Activated CD4-positive, alpha-beta memory T cell treated with anti-CD3 and anti-CD28 coated beads for 36 hours (primary cell): ENCODE measurements at regions of chr17 and their contacts with region 1.

Region 1: GRCh38 chr17:29705386-29705785 is 82.7 kb upstream of the CORO6 start:
- DNase-seq: no peak
- H3K4me3 Mint-ChIP-seq: peak overlapping the region; percentile 61
- H3K27ac Mint-ChIP-seq: peak overlapping the region; percentile 95
- H3K4me1 Mint-ChIP-seq: peaks cover 41% of the 10 kb centered on the region
- H3K27me3 Mint-ChIP-seq: no peaks in the 10 kb centered on the region

Region 2: DNA sequence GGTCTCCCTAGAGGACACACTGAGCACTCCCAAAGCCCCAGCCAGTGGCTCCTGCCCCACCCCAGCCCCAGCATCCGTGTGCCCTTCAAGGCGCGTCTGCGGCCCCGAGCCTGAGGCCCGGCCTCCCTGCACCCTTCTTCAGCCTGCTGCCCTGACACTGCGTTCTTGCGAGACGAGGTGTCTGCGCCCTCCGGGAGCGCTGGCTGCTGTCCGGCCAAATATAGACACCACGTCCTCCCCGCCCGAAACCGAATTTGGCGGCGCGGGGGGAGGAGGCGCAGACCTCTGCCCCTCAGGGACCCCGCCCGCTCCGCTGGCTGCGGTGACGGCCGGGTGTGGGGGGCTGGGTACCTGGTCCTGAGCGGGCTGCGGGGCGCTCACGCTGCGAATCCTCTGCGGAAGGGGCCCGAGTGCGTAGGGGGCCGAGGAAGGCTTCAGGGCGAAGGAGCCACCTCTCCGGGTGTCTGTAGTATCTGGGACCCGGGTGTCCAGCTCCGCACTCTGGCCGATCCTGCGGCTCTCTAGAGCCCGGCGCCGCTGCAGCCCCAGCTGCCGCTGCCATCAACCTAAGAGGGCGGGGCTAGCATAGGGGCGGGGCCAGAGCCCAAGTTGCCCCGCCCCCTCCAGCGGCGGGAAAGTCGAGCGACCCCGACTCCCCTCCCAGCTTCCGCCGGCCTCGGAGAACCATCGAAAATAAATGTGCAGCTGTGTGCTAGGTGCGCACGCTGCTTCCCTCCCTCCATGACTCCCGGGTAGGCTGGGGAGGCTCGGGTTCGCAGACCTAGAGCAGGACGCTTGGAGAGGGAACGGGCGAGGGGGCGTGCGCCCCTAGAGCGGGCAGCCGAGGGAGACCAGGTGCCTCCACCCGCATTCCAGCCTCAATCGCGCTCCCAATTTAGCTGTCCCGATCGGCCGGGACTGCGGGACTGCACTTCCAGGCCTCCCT is 82.8 kb before region 1 on chr17 and contains the start of gene CORO6:
- CTCF ChIA-PET with region 1: interaction called, 19 read pairs
- POLR2A ChIA-PET with region 1: interaction called, 5 read pairs
- intact Hi-C with region 1: loop called (anchors 2 kb)
- DNase-seq: peak; percentile 74
- H3K4me3 Mint-ChIP-seq: peak within 1 kb of the TSS; percentile 78
- H3K27ac Mint-ChIP-seq: peak within 1 kb of the TSS; percentile 85
- H3K4me1 Mint-ChIP-seq: peaks cover 60% of the 10 kb centered on the region
- H3K27me3 Mint-ChIP-seq: no peaks in the 10 kb centered on the region
- total RNA-seq, gene CORO6: 21.3 to 22.1 TPM

Region 3: DNA sequence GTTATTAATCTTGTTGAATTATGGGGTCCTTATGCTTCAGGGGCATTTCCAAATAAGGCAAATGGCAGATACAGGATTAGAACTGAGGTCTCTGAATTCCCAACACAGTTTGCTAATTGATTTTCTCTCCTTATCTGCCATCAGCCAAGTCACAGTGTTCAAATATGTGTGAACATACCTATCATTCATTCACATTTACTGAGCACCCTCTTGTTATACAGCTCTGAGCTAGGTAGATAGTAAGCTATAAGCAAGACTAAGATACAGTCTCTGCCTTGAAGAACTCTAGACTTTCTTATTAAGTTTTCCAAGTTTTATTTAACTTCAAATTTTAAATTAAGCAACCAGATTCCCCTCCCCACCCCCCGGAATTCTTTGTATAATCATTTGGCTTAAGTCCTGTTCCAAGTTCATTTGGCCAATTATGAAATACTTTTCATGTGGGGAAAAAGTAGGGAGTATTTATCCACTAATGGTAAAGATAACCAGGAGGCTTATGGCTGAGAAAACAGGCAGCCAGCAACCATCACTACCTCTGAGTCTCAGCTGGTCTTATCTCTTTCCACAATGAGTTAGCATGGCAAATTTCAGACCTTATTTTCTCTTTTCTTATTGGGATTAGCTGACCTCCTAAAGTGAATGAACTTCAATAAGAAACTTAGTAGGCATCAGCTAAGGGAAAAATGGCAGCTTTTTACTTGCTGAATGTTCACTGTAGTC is 51.2 kb before region 1 on chr17:
- CTCF ChIA-PET with region 1: no interaction called
- POLR2A ChIA-PET with region 1: no interaction called
- intact Hi-C with region 1: no loop called
- DNase-seq: no peak
- H3K4me3 Mint-ChIP-seq: no peak overlapping the region
- H3K27ac Mint-ChIP-seq: no peak overlapping the region
- H3K4me1 Mint-ChIP-seq: peaks cover 2% of the 10 kb centered on the region
- H3K27me3 Mint-ChIP-seq: no peaks in the 10 kb centered on the region

Region 4: GRCh38 chr17:29664743-29665480 is 40.5 kb before region 1 on chr17:
- CTCF ChIA-PET with region 1: interaction called, 3 read pairs
- POLR2A ChIA-PET with region 1: interaction called, 6 read pairs
- intact Hi-C with region 1: loop called (anchors 1 kb)
- DNase-seq: no peak
- H3K4me3 Mint-ChIP-seq: no peak overlapping the region
- H3K27ac Mint-ChIP-seq: peak overlapping the region; percentile 84
- H3K4me1 Mint-ChIP-seq: peaks cover 33% of the 10 kb centered on the region
- H3K27me3 Mint-ChIP-seq: no peaks in the 10 kb centered on the region

Region 5: GRCh38 chr17:29687596-29687995 is 17.8 kb before region 1 on chr17:
- CTCF ChIA-PET with region 1: interaction called, 6 read pairs
- POLR2A ChIA-PET with region 1: interaction called, 10 read pairs
- intact Hi-C with region 1: loop called (anchors 1 kb)
- DNase-seq: no peak
- H3K4me3 Mint-ChIP-seq: no peak overlapping the region
- H3K27ac Mint-ChIP-seq: no peak overlapping the region
- H3K4me1 Mint-ChIP-seq: peaks cover 17% of the 10 kb centered on the region
- H3K27me3 Mint-ChIP-seq: no peaks in the 10 kb centered on the region

Region 6: DNA sequence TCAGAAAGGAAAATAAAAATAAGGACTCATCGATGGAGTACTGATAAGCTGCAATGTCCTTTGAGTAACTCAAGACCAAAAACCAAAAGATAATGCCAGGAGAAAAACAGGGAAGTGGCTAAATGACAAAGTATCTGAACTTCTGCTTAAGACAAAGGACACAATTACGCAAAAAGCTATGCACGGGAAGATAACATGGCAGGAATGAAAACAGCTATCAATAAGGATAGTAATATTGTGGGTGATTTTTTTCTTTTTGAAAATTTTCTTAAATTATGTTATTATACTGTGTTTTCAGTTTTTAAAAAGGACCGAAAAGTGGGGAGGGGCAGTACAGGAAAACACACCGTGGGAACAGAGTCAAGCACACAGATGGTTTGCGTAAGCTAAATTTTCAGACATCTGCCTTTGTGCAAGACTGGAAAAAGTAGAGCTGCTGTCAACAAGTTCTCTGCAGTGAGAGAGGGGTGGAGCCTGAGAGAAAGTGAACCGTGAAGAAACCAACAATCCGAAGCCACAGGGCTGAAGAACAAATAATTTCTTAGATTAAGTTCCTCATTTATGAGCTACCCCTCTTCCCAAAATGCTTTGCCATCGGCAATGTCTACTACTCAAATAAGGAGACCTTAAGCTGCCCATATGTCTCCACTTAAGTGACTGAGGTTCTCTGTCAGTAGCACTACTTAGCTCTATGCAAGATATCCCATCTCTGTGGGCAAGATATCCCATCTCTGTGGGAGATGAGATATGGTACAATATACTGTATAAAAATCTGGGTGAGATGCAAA is 17.2 kb after region 1 on chr17:
- CTCF ChIA-PET with region 1: interaction called, 10 read pairs
- POLR2A ChIA-PET with region 1: interaction called, 13 read pairs
- intact Hi-C with region 1: loop called (anchors 1 kb)
- DNase-seq: peak; percentile 35
- H3K4me3 Mint-ChIP-seq: peak overlapping the region; percentile 28
- H3K27ac Mint-ChIP-seq: peak overlapping the region; percentile 56
- H3K4me1 Mint-ChIP-seq: peaks cover 69% of the 10 kb centered on the region
- H3K27me3 Mint-ChIP-seq: no peaks in the 10 kb centered on the region

Region 7: GRCh38 chr17:29777663-29778062 is 72.3 kb after region 1 on chr17:
- CTCF ChIA-PET with region 1: interaction called, 10 read pairs
- POLR2A ChIA-PET with region 1: no interaction called
- intact Hi-C with region 1: no loop called
- DNase-seq: no peak
- H3K4me3 Mint-ChIP-seq: no peak overlapping the region
- H3K27ac Mint-ChIP-seq: no peak overlapping the region
- H3K4me1 Mint-ChIP-seq: peaks cover 7% of the 10 kb centered on the region
- H3K27me3 Mint-ChIP-seq: no peaks in the 10 kb centered on the region